ENCODE measurements at regions of chr3 and their contacts with region 1.

Region 1: GRCh38 chr3:39447637-39448483 is 19.6 kb upstream of the MOBP start:
- DNase-seq: peak; percentile 45
- H3K4me3 ChIP-seq: no peak overlapping the region
- CTCF ChIP-seq: peak; percentile 85

Region 2: DNA sequence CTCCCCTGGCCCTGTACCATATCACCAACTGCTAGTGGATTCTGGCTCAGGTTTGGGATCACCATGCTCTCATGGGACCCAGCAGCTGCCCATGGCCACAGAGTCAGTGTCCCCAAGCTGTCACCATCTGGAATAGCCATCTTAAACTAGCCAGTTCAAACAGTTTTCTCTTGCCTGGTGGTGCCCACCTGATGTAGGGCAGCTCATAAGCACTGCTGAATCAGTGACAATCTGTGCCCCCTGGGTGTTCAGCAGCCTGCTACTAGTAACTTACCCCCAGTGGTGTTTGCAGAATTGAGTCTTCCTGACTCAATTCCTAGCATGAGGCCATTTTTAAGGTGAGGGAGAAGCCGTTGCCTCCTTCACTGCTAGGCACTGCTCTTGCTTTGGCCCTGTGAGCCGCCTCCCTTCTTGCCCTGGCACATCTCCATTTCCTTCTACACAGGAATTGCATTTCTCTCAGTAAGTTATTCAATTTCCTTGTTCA is 33.4 kb before region 1 on chr3:
- CTCF ChIA-PET with region 1: interaction called, 26 read pairs
- POLR2A ChIA-PET with region 1: no interaction called
- DNase-seq: no peak
- H3K4me3 ChIP-seq: no peak overlapping the region
- CTCF ChIP-seq: no peak

Region 3: DNA sequence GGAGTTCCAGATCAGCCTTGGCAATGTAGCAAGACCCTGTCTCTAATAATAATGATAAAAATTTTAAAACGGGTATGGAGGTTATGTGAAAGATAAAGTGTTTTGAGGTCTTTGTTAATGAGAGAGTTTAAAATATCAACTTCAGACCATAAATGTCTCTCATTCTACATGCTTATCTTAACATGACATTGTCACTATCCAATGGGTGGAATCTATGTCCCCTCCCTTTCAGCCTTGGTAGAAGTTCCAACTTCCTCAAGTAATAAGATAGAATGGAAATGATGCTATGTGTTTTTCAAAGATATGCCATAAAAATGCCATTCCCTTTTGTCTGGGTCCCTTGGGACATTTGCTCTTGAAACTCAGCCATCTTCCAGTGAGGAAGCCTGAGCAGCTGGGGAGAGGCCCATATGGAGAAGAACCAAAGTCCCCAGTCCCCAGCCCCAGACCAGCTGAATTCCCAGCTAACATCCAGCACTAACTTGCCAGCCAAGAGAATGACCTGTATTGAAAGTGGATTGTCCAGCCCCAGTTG is 24.4 kb before region 1 on chr3:
- CTCF ChIA-PET with region 1: interaction called, 28 read pairs
- POLR2A ChIA-PET with region 1: no interaction called
- DNase-seq: no peak
- H3K4me3 ChIP-seq: no peak overlapping the region
- CTCF ChIP-seq: no peak

Region 4: GRCh38 chr3:39434574-39434973 is 13.3 kb before region 1 on chr3:
- CTCF ChIA-PET with region 1: interaction called, 15 read pairs
- POLR2A ChIA-PET with region 1: no interaction called
- DNase-seq: no peak
- H3K4me3 ChIP-seq: no peak overlapping the region
- CTCF ChIP-seq: no peak

Region 5: DNA sequence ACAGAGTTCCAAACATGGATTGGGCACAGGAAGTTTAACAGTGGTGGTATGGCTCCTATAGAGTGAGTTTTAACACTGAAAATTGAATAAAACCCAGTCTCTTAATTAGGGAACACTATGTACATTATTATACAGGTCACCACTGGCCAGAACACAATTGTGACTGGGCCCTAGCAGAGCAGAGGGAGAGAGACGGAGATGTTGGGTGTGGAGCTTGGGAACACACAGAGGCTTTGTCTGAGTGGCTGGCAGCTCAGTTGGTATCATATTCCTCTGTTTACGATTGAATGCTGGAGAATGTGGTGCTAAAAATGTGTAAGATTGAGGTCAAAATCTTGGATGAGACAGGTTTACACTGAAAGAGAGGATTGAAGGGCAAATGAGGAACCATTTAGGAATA is 12.8 kb after region 1 on chr3:
- CTCF ChIA-PET with region 1: interaction called, 42 read pairs
- POLR2A ChIA-PET with region 1: no interaction called
- DNase-seq: no peak
- H3K4me3 ChIP-seq: no peak overlapping the region
- CTCF ChIP-seq: no peak

Region 6: GRCh38 chr3:39473452-39474127 is 25.7 kb after region 1 on chr3:
- CTCF ChIA-PET with region 1: interaction called, 15 read pairs
- POLR2A ChIA-PET with region 1: no interaction called
- DNase-seq: no peak
- H3K4me3 ChIP-seq: no peak overlapping the region
- CTCF ChIP-seq: no peak

Region 7: DNA sequence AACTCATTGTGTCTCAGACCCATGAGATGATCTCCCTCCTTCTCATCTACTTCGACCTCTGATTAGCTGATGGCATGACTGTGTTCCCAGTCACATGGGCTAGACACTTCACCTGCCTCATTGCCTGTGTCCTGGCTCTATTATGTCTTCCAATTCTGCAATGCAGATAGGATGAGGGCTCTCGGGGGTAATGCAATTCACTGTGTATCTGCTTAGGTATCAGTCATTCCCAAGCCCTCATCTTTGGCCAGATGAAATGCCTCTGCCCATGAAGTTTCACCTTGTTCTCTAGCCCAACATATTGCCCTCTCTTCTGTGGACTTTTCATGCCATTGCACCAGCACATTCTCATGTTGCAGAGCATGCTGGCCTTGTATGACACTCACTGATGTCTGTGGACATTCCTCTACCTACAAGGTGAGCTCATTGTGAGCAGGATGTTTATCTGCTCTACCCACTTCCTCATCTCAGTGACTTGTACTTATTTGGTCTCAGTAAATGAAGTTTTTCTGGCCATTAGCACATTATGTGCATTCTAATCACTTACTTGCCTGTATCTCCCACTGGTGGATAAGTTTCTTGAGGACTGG is 51.9 kb after region 1 on chr3:
- CTCF ChIA-PET with region 1: interaction called, 60 read pairs
- POLR2A ChIA-PET with region 1: no interaction called
- DNase-seq: no peak
- H3K4me3 ChIP-seq: no peak overlapping the region
- CTCF ChIP-seq: no peak

Measured in AG04449 (cell line).